AG04449 (cell line): ENCODE measurements at regions of chr21 and their contacts with region 1.

Region 1: DNA sequence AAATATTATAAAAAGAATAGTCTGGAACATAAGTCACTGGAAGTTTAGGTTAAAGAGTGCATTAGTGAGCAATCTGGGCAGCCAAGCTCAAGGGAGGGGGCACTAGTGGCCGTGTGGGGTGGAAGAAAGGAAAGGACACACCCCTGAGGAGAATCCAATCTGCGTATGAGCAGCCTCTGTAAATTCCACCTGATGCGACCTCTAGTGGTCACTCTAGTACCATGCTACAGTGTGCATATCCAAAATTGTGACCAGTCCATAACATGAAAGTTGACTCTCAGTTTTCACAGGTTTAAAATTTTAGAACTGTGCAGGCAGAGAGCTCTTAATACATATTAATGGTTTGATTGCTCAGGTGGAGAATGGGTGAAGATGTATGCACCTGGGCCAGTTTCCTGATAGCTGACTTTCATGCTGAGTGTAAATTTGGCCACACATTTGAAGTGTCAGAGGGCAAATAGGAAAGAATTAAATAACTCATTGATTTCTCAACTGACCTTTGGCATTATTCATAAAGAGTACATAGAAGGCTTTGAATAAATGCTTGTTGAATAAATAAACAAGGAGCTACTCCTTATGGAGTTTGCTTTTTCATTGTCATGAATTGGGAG is 105.9 kb upstream of the C21orf91 start:
- DNase-seq: no peak
- H3K4me3 ChIP-seq: no peak overlapping the region
- CTCF ChIP-seq: peak; percentile 75

Region 2: DNA sequence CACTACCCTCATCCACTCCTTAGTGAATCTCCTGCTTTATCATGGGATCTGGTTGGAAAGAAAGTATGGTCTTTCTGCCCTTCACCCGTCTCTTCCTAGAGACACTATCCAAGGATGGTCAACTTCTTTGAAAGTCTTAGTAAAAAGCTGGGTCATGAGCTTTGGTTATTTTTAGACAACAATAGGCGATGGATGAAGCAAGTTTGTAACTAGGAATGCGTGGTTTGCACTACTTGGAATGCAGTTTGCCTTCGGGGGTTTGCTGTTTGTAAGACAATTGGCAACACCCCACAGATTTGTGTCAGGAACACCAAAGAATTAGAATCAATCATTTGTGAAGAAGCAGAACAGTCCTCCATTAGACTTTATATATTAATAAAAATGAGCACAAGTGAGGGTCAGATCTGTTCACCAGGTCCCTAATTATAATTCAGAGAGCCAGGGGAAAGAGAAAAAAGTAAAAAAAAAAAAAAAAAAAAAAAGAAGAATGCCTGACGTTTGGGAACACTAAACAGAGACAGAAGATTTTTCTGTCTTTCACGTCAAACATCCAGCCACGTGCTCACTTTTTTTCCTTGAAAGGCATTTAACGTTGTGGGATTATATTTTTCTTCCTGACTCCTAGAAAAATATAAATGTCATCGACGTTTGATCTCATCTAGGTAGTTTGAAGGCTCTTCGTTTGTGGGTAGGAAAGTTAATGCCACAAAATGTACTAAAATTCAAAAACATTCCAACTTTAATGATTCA is 251.7 kb before region 1 on chr21:
- CTCF ChIA-PET with region 1: interaction called, 57 read pairs
- POLR2A ChIA-PET with region 1: no interaction called
- DNase-seq: no peak
- H3K4me3 ChIP-seq: no peak overlapping the region
- CTCF ChIP-seq: no peak

Region 3: DNA sequence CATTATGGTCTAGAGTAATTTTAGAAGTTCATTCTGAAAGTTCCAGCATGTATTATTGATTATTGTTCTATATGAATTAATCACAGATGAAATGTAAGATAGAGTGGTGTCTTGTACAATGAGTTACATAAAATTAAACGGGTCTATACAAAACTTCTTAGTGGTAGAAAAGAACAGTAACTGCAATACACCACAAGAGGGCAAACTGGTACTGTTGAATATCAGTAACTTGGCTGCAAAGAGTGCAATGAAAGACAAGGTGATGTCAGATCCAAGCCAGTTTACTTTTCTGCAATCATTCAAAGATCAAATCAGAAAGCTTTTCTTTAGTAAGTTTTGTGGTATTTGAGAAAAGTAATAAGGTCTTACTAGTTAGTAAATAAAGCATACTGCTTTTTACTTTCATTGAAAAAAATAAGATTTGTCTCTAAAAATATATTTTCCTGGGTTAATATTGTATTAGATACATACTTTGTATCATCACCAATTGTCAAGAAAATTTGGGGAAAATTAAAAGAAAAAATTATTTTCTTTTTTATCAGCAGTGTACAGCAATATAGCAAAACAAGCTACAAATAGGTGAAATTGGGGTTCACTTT is 246.0 kb before region 1 on chr21:
- CTCF ChIA-PET with region 1: interaction called, 57 read pairs
- POLR2A ChIA-PET with region 1: no interaction called
- DNase-seq: peak; percentile 19
- H3K4me3 ChIP-seq: no peak overlapping the region
- CTCF ChIP-seq: peak; percentile 62

Region 4: DNA sequence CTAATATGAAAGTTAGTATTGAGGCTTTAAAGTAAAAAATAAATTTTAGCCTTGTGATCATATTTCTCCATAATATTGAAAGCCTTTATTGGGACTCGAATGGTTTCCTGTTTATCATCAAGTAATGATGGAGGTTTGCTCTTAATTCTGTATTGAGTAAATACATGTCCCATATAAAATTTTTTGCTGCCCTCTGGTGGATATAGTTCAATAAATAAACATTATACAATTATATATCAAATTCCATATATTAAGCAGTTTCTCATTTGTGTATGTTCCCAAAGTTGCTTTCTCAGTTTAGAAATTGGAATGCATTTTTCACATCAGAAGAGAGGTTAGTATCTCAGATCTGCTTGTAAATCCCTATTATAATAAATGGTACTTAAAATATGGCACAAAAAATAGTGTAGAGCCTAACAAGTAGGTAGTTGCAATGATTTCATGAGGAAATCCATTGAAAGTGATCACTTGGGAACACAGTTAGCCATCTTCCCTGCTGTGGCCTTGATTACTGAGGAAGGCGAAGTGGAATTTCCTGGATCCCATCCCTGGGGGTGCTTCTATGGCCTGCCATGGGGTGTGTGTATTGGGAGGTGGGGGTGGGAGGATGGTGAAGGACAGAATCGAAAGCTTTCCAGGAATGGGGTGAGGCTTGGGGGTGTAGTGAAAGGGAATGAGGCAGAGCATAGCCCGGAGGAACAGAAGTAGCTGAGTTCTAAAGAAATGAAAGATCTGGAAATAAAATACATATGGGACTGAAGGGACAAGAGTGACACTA is 21.9 kb before region 1 on chr21:
- CTCF ChIA-PET with region 1: interaction called, 15 read pairs
- POLR2A ChIA-PET with region 1: no interaction called
- DNase-seq: no peak
- H3K4me3 ChIP-seq: no peak overlapping the region
- CTCF ChIP-seq: no peak

Region 5: DNA sequence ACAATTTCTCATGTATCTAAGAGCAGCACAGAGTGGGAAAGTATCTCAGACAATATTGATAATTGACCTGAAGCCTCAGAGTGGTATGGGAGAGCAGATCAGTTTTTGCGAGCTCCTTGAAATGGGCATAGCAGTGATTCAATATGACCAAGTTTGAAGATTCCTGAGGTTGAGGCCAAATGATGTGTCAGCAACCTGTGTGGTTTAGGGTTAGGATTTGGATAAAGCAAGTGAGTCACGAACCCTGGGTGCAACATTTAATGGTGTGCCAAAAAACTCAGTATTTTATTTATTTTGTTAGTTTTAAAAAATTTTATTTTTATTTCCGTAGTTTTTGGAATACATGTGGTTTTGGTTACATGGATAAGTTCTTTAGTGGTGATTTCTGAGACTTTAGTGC is 13.5 kb before region 1 on chr21:
- CTCF ChIA-PET with region 1: interaction called, 42 read pairs
- POLR2A ChIA-PET with region 1: no interaction called
- DNase-seq: no peak
- H3K4me3 ChIP-seq: no peak overlapping the region
- CTCF ChIP-seq: no peak

Region 6: GRCh38 chr21:18030248-18030647 is 105.1 kb after region 1 on chr21:
- CTCF ChIA-PET with region 1: no interaction called
- POLR2A ChIA-PET with region 1: no interaction called
- DNase-seq: no peak
- H3K4me3 ChIP-seq: no peak overlapping the region
- CTCF ChIP-seq: no peak

Region 7: DNA sequence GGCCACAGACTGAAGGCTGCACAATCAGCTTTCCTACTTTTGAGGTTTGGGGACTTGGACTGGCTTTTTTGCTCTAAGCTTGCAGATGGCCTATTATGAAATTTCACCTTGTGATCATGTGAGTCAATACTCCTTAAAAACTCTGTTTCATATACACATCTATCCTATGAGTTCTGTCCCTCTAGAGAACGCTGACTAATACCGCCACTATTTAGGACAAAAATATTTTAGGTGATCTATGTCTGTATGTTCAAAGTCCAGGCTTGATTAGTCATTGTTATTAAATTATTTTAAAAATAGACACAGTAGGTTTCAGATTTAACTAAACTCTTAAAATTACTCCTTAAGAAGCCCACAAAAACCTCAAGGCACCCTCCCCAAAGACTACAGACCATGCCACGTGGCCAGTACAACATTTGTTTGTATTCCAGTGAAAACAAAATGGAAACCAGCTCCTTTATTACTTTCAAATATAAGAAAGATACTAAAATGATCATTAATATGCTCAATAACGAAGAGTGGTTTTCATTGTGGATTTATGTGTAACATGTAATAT is 415.4 kb after region 1 on chr21:
- CTCF ChIA-PET with region 1: no interaction called
- POLR2A ChIA-PET with region 1: no interaction called
- DNase-seq: no peak
- H3K4me3 ChIP-seq: no peak overlapping the region
- CTCF ChIP-seq: no peak